ENCODE measurements at regions of chr16 and their contacts with region 1.

Region 1: DNA sequence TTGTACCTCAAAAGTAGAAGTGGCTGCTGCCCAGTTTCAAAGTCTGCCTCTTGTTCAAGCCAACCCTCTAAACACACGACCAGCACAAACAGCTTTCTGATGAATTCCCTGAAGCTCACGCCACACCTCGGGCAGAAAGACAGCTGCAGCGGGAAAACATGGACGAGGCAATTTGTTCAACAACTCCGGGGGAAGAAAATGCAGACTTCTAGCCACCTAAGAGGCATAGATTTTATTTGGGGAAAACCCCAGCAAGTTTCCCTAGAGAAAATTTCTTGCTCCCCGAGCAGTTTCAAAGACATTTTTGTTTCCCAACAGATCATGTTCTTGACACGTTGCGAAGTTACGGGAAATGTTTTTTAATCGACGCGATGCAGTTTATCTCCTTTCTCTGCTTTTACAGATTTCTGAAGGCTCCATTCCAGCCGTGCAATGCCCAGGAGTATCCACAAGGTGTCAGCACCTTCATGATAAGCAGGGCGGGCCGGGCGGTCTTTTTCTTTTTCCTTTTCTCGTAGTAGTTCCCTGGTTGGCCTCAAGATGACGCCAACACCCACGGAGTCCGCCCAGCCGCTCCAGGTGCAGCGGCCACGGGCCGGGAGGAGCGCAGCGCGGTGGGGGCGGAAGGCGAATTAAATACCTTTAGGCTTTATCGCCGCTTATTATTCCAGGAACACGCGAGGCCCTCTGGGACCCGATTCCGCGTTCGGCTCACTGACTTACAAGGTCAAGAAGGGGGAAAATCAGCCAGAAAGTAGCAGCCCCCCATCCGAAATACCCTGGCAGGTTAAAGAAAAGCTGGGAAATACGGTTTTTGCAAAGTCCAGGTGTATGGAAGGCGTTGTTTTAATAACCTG is 2.9 kb upstream of the FOXC2 start:
- DNase-seq: peak; percentile 92
- ATAC-seq: peak; percentile 71

Region 2: DNA sequence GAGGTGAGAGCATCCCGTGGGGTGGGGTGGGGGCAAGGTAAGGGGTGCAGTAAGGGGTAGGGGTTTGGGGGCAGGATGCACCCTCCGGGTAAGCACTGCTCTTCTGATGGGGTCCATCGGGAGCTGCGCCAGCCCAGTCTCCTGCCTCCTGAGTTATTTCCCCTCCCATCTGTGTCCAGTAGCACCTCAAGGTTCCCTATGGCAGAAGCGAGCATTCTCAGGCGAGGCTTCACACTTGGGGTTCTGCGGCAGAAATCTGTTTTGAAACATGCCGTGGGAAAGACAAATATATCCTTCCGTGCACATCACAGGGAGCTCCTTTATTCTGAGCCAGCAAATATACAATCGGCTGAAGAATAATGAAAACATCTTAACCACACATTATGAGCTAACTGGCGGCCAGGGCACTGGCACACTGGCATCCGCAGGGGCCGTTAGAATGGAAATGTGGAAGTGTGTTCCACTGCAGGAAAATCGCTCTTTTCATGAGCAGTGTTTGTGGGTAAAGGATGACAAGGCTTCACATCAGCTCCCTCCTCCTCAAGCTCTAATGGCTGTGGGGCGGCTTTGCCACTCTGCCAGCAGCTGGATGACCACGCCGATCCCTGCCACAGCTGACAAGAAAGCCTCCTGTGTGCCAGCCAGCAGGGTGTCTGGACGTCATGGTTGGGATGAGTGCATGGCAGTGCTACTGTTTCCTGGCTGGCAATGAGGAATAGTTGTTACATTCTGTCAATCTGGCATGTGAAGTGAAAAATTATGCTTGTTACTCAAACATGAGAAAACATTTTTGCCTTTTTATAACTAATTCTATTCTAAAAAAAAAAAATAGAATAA is 28.7 kb before region 1 on chr16:
- intact Hi-C with region 1: no loop called
- DNase-seq: no peak
- ATAC-seq: no peak

Region 3: DNA sequence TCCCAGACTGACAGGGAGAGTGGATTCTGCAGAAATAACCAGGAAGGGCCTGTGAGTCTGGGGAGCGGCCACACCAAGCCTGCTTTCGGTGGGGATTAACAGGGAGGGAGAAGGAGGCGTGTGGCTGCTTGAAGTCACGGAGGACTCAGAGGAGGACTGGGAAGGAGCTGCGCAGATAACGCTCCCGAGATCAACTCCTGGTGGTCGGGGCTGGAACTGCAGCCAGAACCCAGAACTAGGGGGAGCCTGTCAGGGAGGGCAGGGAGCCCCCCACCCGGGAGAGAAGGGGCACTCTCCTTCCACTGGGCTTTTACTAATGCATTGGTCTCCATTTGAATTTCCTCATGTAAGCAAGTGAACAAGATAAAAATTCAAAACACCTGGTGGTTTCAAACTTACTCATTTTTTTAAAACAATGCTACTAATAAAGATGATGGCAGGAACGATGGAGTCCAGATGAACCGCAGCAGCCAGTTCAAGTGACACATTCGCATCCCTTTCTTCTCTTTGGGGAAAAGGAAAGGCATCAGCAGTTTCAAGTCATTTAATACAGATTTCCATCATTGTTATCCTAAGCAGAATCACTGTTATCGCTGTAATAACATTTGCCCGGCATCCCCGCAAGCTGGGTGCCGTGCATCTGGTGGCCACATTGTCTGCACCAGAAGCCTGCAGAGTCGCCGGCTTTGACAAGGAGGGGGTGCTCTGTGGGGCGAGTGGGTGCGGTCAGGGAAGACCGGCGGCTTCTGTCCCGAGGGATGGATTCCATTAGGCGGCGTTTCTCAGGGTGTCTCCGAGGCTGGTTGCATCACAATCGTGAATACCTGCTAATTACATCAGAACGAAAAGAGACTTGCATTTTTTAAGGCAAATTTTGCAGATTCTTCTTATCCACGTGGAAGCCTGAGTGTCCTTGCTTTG is 197.7 kb after region 1 on chr16:
- intact Hi-C with region 1: loop called (anchors 5 kb)
- DNase-seq: peak; percentile 75
- ATAC-seq: peak; percentile 72

Region 4: GRCh38 chr16:87062569-87063442 is 499.1 kb after region 1 on chr16:
- intact Hi-C with region 1: loop called (anchors 1 kb)
- DNase-seq: peak; percentile 83
- ATAC-seq: peak; percentile 91

Region 5: GRCh38 chr16:87278191-87279095 is 714.7 kb after region 1 on chr16:
- intact Hi-C with region 1: loop called (anchors 1 kb)
- DNase-seq: peak; percentile 88
- ATAC-seq: peak; percentile 94

Region 6: GRCh38 chr16:87297918-87298631 is 734.4 kb after region 1 on chr16:
- intact Hi-C with region 1: loop called (anchors 5 kb)
- DNase-seq: peak; percentile 48
- ATAC-seq: no peak